Activated T-helper 2 cell treated with anti-CD3 and anti-CD28 coated beads, Interferon-gamma antibody, Interleukin-2, Interleukin-4, amounts not matched to agents 10 μg/mL and 5 μg/mL and 100 μg/mL, durations not matched to agents 14 hours and 24 hours and 36 hours (primary cell): ENCODE measurements at regions of chr7 and their contacts with region 1.

Region 1: GRCh38 chr7:150420987-150421674 is 29.3 kb upstream of the GIMAP8 start:
- DNase-seq: peak; percentile 79
- H3K4me3 Mint-ChIP-seq: no peak overlapping the region
- H3K27ac Mint-ChIP-seq: no peak overlapping the region
- H3K4me1 Mint-ChIP-seq: peaks cover 10% of the 10 kb centered on the region
- H3K27me3 Mint-ChIP-seq: peaks cover 2% of the 10 kb centered on the region

Region 2: DNA sequence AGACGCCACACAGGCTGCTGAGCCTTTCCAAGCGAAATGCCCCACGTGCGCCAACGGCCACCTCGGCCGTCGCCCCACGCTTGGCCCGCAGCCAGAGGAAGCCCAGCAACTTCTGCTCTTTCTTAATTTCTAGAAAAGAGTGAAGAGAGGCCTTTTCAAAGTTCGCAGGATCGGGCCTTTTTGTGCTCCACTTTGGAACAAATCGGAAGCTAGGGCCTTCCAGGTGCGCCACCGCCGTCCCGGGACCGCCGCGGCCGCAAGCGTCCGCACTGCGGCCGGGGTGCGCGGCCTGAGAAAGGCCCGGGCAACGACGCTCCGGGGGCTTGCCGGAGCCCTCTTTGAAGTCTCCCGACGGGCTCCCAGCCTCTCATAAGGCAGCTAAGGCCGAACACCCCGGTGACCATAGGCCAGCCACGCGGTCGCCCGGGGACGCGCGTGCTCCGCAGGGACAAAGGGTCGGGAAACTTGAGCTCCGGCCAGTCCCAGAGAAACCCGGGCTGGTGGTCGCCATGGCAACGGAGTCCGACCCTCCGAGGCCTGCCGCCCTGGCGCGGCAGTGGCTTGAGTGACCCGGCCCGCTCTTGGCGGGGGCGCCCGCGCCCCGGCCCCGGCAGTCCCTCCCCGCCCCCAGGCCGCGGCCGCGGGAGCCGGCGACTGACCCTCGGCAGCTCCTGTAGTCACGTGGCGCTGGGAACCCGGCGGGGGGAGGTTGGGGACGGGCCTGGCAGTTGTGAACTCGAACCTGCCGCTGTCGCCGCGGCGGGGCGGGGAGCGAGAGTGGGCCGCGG is 52.8 kb before region 1 on chr7 and contains the start of gene REPIN1:
- intact Hi-C with region 1: loop called (anchors 2 kb)
- DNase-seq: peak; percentile 75
- H3K4me3 Mint-ChIP-seq: peak within 1 kb of the TSS; percentile 94
- H3K27ac Mint-ChIP-seq: peak within 1 kb of the TSS; percentile 94
- H3K4me1 Mint-ChIP-seq: peaks cover 36% of the 10 kb centered on the region
- H3K27me3 Mint-ChIP-seq: no peaks in the 10 kb centered on the region
- total RNA-seq, gene REPIN1: 81.5 and 82.2 TPM in 2 replicates

Region 3: DNA sequence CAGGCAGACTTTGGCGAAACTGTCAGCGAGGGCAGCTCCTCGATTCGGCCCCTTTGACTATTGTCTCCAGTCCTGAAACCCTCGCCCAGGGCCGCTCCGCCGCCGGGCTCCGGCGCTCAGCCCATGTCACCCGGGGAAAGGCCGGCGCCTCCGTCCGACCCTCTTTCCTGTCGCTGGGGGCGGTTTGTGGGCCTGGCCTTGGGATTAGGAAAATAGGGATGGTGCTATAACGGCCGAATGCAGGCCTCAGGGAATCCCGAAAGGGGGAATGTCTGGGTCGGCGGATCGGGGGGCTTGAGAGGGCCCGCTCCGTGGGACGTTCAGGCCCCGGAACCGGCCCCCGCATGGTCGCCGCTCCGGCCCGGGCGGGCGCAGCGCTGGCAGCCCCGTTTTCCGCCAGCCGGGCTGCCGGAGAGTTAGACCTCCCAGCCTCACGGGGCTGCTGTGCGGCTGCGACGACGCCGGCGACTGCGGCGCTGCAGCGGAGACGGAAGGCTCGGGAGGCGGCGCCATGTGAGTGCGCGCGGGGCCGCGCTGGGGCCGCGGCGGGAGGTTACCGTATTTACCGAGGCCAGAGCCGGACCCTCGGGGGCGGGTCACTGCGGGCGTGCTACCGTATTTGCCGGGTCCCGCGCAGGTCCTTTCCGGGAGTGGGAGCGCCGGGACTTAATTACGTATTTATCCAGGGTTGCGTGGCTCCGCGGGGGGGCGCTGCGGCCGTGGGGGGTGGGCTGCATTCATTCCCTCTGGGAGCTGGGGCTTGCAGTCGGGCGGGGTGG is 16.1 kb before region 1 on chr7:
- intact Hi-C with region 1: loop called (anchors 1 kb)
- DNase-seq: peak; percentile 78
- H3K4me3 Mint-ChIP-seq: peak overlapping the region; percentile 88
- H3K27ac Mint-ChIP-seq: peak overlapping the region; percentile 95
- H3K4me1 Mint-ChIP-seq: peaks cover 58% of the 10 kb centered on the region
- H3K27me3 Mint-ChIP-seq: no peaks in the 10 kb centered on the region

Region 4: DNA sequence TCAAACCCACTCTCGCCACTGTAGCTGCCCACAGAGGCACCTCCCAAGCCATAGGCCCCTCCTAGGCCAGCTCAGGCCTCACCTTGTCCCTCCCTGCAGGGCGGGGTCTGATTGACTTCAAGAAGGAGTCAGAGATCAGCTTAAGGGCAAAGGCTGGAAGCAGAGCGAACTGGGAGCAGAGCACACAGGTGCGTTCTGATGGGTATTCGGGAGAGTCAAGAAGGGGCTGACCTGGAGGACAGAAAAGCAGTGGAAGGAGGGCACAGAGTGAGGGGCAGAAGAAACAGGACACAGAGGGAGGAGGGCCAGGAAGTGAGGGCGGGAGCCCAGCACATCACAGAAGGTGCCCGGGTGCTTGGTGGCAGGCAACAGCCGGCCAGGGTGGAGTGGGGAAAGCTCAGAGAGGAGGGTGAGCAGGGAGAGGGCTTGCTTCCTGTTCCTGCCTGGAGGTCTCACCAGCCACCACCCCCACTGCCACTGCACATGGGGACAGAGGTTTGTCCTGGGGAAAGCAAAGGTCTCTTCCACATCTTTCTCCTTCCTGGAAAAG is 431.3 kb after region 1 on chr7 and contains the start of gene AOC1:
- intact Hi-C with region 1: no loop called
- DNase-seq: no peak
- H3K4me3 Mint-ChIP-seq: no peak within 1 kb of the TSS
- H3K27ac Mint-ChIP-seq: no peak within 1 kb of the TSS
- H3K4me1 Mint-ChIP-seq: no peaks in the 10 kb centered on the region
- H3K27me3 Mint-ChIP-seq: peaks cover 16% of the 10 kb centered on the region
- total RNA-seq, gene AOC1: 0.16 TPM in 1 of 2 replicates, not detected in the other